Dorsolateral prefrontal cortex (tissue), 120 donors: ENCODE measurements at regions of chr9 and their contacts with region 1.

Region 1: DNA sequence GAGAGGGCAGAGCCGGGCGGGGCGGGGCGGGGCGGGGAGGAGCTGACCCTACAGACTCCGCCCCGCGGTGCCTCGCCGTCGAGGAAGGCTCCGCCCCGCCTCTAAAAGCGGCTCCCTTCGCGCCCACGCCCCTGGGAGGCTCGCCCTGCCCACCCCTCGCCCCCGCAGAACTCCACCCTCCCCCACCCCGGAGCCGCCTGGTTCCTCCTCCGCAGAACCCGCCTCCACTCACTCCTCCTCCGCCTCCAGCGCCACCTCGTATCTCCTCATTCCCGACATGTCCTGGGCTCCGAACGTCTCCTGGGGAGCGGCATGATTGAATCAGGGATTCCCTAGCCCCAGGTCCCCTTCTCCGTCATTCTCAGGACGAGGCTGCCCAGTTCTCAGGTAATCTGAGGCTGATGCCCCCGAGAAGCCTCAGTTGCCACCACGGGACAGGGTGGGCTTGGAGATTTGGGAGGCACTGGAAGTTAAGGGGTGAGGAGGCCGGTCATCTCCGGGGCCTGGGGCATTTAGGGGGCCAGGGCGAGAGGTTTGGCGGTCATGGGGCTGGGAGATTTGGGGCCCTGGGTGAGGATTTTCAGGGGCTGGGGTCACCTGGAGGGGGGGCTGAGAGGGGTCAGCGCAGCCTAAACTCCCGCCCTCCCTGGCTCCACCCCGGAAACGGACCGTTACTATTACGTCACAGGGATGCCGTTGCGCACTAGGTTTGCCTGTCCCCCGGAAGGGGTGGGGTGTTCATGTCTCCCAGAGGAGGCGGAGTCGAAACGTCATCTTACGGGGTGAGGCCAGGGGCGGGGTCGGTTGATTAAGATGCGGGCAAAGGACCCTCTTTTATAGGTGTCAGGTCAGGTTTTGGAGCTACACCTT is 3.2 kb upstream of the CCL27 start:
- DNase-seq: peak; percentile 85 to 98 (median 96)
- H3K4me3 ChIP-seq: peak overlapping the region; percentile 35 to 94 (median 79)
- H3K27ac ChIP-seq: peak overlapping the region; percentile 58 to 99 (median 95)
- H3K27me3 ChIP-seq: no peaks in the 10 kb centered on the region
- CTCF ChIP-seq: peak in 28 of 56 donors; percentile 1 to 57 (median 28)

Region 2: DNA sequence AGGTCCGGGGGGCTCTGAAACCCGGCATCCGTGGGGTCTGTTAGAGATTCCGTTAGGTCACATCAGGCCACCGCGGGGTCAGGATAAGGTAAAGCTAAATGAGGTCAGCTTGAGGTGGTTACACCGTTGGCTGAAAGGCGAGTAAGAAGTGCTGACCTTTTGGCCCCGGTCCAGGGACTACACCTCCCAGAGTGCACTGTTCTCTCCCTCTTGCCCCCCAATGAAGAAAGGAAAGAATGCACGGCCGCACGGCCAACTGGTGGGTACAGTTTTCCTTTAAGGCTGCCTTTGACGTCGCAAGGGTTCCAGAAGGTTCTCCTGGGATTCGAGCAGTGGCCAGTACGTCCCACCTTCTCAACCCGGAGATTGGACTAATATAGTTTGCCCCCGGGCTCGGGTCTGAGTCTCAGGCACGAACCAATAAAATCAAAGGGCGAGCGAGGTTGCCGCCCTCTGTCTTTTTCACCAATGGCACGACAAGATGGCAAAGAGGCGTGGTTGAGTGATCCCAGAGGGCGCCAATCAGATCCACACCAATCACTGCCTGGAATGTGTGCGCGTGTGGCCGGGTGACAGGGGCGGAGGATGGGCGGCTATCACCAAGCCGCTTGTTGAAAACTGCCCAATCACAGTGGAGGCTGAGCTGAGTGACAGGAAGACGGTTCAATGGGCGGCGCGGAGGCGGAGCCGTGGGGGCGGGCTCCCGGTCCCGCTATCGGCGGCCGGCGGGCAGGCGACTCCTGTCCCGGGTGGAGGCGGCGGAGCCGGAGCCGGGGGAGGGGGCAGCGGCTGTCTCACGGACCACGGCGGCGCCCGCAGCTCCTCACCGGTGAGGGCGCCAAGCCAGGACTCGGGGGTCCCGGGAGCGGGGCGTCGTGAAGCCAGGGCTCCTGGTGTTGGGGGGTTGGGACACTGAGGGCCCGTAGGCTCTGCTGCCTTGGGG is 323.7 kb after region 1 on chr9 and contains the start of gene DNAJB5:
- intact Hi-C with region 1: loop called in 1 of 2 experiments (anchors 10 kb)
- DNase-seq: peak; percentile 99 to 100 (median 100)
- H3K4me3 ChIP-seq: peak within 1 kb of the TSS; percentile 64 to 98 (median 85)
- H3K27ac ChIP-seq: peak within 1 kb of the TSS; percentile 80 to 99 (median 93)
- H3K27me3 ChIP-seq: no peaks in the 10 kb centered on the region
- CTCF ChIP-seq: peak in 20 of 56 donors; percentile 5 to 62 (median 26)
- total RNA-seq, gene DNAJB5: 7.7 to 33.7 (median 13.4) TPM

Region 3: DNA sequence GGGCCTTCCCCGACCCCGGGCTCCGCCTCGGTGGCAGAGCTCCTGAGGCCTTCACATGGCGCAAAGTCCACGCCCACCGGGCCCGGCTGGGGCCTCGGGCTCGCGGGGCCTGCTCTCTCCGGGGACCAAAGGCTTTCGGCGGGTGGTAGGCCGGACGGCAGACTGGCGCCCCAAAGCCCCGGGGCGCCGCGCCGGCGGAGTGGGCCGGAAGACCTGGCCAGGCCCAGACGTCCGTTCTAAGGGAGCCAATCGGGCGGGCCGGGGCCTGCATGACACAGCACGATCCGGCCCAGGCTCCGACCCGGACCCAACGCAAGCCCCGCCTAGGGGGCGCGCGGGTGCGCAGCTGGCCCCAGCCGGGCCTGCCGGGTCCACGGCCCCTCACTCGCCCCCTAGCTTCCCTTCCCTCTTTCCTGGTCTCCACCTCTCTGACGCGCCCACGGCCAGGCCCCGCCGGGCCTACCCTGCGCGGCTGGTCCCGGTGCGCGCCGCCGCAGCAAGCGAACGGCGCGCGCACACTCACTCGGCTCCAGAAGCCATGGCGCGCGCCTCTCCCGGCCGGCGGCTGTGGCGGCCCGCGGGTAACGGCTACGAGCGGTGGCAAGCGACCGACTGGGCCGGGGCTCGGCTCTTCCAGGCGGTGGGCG is 406.3 kb after region 1 on chr9:
- intact Hi-C with region 1: loop called in 1 of 2 experiments (anchors 10 kb)
- DNase-seq: peak; percentile 54 to 84 (median 66)
- H3K4me3 ChIP-seq: peak overlapping the region; percentile 70 to 100 (median 93)
- H3K27ac ChIP-seq: peak overlapping the region; percentile 60 to 99 (median 97)
- H3K27me3 ChIP-seq: no peaks in the 10 kb centered on the region
- CTCF ChIP-seq: peak in 51 of 56 donors; percentile 9 to 70 (median 46)